ENCODE measurements at regions of chr12 and their contacts with region 1.

Region 1: GRCh38 chr12:111673503-111673902 is 12.3 kb downstream of the BRAP start:
- DNase-seq: peak in 1 of 2 experiments; percentile 56
- ATAC-seq: peak; percentile 70 to 85; a peak in 4 of 6 replicates
- H3K4me3 ChIP-seq: no peak overlapping the region
- H3K27ac ChIP-seq: no peak overlapping the region
- H3K4me1 ChIP-seq: no peaks in the 10 kb centered on the region
- CTCF ChIP-seq: peak; percentile 61
- EP300 ChIP-seq: no peak
- POLR2A ChIP-seq: no peak
- RAD21 ChIP-seq: peak; percentile 63 to 74

Region 2: GRCh38 chr12:111322336-111323250 is 350.9 kb before region 1 on chr12:
- CTCF ChIA-PET with region 1: no interaction called
- POLR2A ChIA-PET with region 1: no interaction called
- DNase-seq: no peak
- ATAC-seq: peak; percentile 18 to 41; a peak in 5 of 6 replicates
- H3K4me3 ChIP-seq: no peak overlapping the region
- H3K27ac ChIP-seq: no peak overlapping the region
- H3K4me1 ChIP-seq: no peaks in the 10 kb centered on the region
- CTCF ChIP-seq: no peak
- EP300 ChIP-seq: no peak
- POLR2A ChIP-seq: no peak
- RAD21 ChIP-seq: no peak

Region 3: DNA sequence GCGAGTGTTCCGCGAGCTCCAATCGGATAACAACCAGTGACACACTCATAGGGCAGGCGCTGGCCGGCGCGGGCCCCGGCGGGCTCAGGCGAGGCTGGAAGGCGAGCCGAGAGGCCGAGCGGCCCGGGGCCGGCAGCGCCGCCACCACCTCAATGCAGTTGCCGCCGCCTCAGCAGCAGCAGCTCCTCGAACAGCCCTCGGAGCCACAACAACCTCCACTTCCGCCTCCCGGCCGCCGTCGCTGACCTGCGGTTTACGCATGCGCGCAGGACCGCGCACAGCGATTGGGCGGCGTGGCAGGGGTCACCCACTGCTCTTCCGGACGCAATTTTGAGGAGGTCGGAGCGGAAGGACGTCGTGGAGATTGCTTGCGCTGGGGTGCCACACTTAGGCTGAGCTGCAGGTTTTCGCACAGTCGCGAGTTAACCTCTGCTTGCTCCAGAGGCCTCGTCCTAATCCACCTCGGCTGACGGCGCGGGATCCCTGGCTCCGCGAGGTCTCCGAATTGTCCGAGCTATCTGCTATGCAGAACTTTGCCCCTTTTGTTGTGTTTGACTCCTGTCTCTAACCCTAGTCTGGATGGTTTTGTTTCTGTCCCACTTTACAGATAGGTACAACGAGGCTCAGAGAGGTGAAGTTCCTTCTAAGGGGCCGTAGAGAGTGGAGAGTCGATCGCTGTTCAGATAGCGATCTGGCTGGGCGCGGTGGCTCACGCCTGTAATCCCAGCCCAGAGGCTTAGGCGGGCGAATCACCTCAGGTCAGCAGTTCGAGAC is 12.4 kb after region 1 on chr12 and contains the starts of genes ACAD10 and BRAP:
- CTCF ChIA-PET with region 1: interaction called, 30 read pairs
- POLR2A ChIA-PET with region 1: interaction called, 14 read pairs
- DNase-seq: peak; percentile 96 to 97
- ATAC-seq: peak; percentile 93 to 96
- H3K4me3 ChIP-seq: peak within 1 kb of the TSS; percentile 89
- H3K27ac ChIP-seq: peak within 1 kb of the TSS; percentile 85 to 90
- H3K4me1 ChIP-seq: peaks cover 21% of the 10 kb centered on the region
- CTCF ChIP-seq: no peak
- EP300 ChIP-seq: no peak
- POLR2A ChIP-seq: peak; percentile 93
- RAD21 ChIP-seq: no peak
- polyA plus RNA-seq, gene ACAD10: 22.0 and 32.6 TPM in 2 replicates
- polyA plus RNA-seq, gene BRAP: 25.2 and 29.7 TPM in 2 replicates